Activated naive CD4-positive, alpha-beta T cell treated with anti-CD3 and anti-CD28 coated beads for 36 hours (primary cell): ENCODE measurements at regions of chr12 and their contacts with region 1.

Region 1: DNA sequence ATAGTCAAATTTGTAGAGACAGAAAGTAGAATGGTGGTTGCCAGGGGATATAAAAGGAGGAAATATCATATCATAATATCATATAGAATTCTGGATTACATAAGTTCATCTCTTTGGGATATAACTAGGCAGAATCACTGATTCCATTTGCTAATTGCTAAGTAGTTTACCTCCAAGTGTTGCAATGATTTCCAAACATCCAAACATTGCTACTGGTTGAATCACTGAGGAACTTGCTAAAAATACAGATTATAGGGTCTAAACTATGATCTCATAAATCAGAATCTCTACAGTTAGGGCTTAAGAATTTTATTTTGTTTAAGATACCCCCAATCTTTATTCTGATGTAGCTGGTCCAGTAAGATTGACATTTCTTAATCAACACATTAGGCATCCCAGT is 16.1 kb upstream of the TAS2R42 start:
- DNase-seq: no peak
- H3K4me3 Mint-ChIP-seq: no peak overlapping the region
- H3K27ac Mint-ChIP-seq: no peak overlapping the region
- H3K4me1 Mint-ChIP-seq: no peaks in the 10 kb centered on the region
- H3K27me3 Mint-ChIP-seq: no peaks in the 10 kb centered on the region

Region 2: GRCh38 chr12:10331642-10332239 is 871.1 kb before region 1 on chr12:
- CTCF ChIA-PET with region 1: no interaction called
- intact Hi-C with region 1: loop called (anchors 10 kb)
- DNase-seq: no peak
- H3K4me3 Mint-ChIP-seq: no peak overlapping the region
- H3K27ac Mint-ChIP-seq: no peak overlapping the region
- H3K4me1 Mint-ChIP-seq: no peaks in the 10 kb centered on the region
- H3K27me3 Mint-ChIP-seq: peaks cover 4% of the 10 kb centered on the region

Region 3: GRCh38 chr12:10771132-10771733 is 431.6 kb before region 1 on chr12:
- CTCF ChIA-PET with region 1: interaction called, 26 read pairs
- intact Hi-C with region 1: loop called (anchors 1 kb)
- DNase-seq: no peak
- H3K4me3 Mint-ChIP-seq: no peak overlapping the region
- H3K27ac Mint-ChIP-seq: no peak overlapping the region
- H3K4me1 Mint-ChIP-seq: no peaks in the 10 kb centered on the region
- H3K27me3 Mint-ChIP-seq: peaks cover 34% of the 10 kb centered on the region

Region 4: DNA sequence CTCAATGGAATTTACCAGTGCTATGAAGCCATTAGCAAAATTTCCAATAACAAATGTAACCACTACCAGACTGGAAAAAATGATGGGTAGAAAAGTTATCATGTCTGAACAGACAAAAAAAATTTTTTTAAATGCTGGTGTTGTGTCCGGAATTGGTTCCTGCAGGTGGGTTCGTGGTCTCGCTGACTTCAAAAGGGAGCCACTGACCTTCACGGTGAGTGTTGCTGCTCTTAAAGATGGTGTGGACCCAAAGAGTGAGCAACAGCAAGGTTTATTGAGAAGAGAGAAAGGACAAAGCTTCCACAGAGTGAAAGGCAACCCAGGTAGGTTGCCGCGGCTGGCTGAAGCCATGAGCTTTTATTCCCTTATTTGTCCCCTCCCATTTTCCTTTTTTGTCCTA is 110.7 kb before region 1 on chr12 and contains the start of gene TAS2R43:
- CTCF ChIA-PET with region 1: no interaction called
- intact Hi-C with region 1: no loop called
- DNase-seq: no peak
- H3K4me3 Mint-ChIP-seq: no peak within 1 kb of the TSS
- H3K27ac Mint-ChIP-seq: no peak within 1 kb of the TSS
- H3K4me1 Mint-ChIP-seq: peaks cover 2% of the 10 kb centered on the region
- H3K27me3 Mint-ChIP-seq: no peaks in the 10 kb centered on the region
- total RNA-seq, gene TAS2R43: 0.26 TPM in 1 of 2 experiments, not detected in the other